Calu3 (cell line): ENCODE measurements at regions of chr12 and their contacts with region 1.

Region 1: GRCh38 chr12:46675736-46676135 is 150.1 kb downstream of the SLC38A4 start:
- DNase-seq: peak; percentile 24
- H3K4me3 Mint-ChIP-seq: peak overlapping the region; percentile 41
- H3K27ac Mint-ChIP-seq: no peak overlapping the region
- H3K4me1 Mint-ChIP-seq: peaks cover 17% of the 10 kb centered on the region
- H3K27me3 Mint-ChIP-seq: no peaks in the 10 kb centered on the region
- CTCF ChIP-seq: no peak

Region 2: DNA sequence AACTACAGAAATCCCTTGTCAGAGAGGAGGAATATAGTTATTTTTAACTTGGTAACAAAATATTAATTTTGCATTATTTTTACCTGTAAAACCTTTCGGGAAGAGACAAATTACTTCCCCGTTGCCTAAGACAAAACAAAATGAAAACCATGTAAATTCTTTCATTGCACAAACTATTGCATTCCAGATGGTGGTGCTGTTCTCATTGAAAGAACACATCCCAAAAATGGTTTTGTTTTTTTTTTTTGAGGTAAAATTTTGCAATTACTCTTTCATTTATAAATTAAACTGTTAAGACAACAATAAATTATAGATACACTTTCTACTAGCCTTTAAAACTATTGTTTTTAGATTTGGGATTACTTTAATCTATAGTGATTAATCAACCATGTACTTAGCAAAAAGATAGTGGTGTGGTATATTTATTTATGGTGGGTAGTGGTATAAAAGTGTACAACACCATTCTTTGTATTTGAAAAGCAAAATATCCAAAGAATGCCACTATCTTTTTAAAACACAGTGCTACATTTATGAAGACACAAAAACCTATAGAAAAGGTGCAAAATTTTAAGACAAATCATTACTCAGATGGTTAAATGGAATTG is 522.4 kb before region 1 on chr12:
- CTCF ChIA-PET with region 1: no interaction called
- intact Hi-C with region 1: loop called (anchors 1 kb)
- DNase-seq: no peak
- H3K4me3 Mint-ChIP-seq: no peak overlapping the region
- H3K27ac Mint-ChIP-seq: no peak overlapping the region
- H3K4me1 Mint-ChIP-seq: peaks cover 8% of the 10 kb centered on the region
- H3K27me3 Mint-ChIP-seq: no peaks in the 10 kb centered on the region
- CTCF ChIP-seq: peak; percentile 27

Region 3: GRCh38 chr12:46342562-46343033 is 333.1 kb before region 1 on chr12:
- CTCF ChIA-PET with region 1: interaction called, 4 read pairs
- intact Hi-C with region 1: loop called (anchors 2 kb)
- DNase-seq: peak; percentile 23
- H3K4me3 Mint-ChIP-seq: no peak overlapping the region
- H3K27ac Mint-ChIP-seq: peak overlapping the region; percentile 15
- H3K4me1 Mint-ChIP-seq: peaks cover 17% of the 10 kb centered on the region
- H3K27me3 Mint-ChIP-seq: no peaks in the 10 kb centered on the region
- CTCF ChIP-seq: peak; percentile 30

Region 4: GRCh38 chr12:46364777-46365580 is 310.8 kb before region 1 on chr12:
- CTCF ChIA-PET with region 1: no interaction called
- intact Hi-C with region 1: loop called (anchors 5 kb)
- DNase-seq: peak; percentile 62
- H3K4me3 Mint-ChIP-seq: peak overlapping the region; percentile 53
- H3K27ac Mint-ChIP-seq: peak overlapping the region; percentile 50
- H3K4me1 Mint-ChIP-seq: peaks cover 16% of the 10 kb centered on the region
- H3K27me3 Mint-ChIP-seq: no peaks in the 10 kb centered on the region
- CTCF ChIP-seq: no peak

Region 5: DNA sequence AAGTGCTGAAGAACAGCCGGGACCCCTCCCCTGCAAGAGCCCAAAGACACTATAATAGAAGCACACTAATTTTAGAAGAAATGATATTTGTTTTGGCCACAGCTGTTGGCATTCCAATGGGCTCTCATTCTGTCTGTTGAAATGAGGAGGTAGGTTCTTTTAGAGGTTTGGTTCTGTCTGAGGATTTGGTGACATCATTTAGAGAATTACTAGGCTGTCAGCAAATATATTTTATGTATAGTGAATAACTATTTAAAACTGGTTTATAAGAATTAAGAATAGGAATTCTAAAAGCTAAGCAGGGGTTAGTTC is 102.4 kb before region 1 on chr12:
- CTCF ChIA-PET with region 1: no interaction called
- intact Hi-C with region 1: no loop called
- DNase-seq: no peak
- H3K4me3 Mint-ChIP-seq: no peak overlapping the region
- H3K27ac Mint-ChIP-seq: no peak overlapping the region
- H3K4me1 Mint-ChIP-seq: no peaks in the 10 kb centered on the region
- H3K27me3 Mint-ChIP-seq: no peaks in the 10 kb centered on the region
- CTCF ChIP-seq: no peak

Region 6: DNA sequence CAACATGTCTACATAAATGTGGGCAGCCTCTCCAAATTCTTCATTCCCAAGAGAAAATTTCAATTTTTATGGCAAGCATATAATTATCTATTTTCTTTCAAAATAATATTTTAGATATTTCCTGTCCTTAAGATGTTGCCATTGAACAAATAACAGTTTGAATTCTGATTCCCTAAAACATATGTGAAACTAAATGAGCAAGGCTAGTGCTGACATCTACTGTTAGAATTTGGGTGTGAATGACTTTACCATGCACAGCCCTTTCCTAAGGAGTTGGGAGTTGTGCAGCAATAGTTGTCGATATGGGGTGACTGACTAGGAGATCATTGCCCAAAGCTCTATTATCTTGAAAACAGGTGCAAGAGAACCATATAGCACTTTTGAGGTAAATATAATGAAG is 258.2 kb after region 1 on chr12:
- CTCF ChIA-PET with region 1: no interaction called
- intact Hi-C with region 1: loop called (anchors 1 kb)
- DNase-seq: peak; percentile 10
- H3K4me3 Mint-ChIP-seq: no peak overlapping the region
- H3K27ac Mint-ChIP-seq: no peak overlapping the region
- H3K4me1 Mint-ChIP-seq: peaks cover 10% of the 10 kb centered on the region
- H3K27me3 Mint-ChIP-seq: no peaks in the 10 kb centered on the region
- CTCF ChIP-seq: no peak

Region 7: GRCh38 chr12:47021298-47021697 is 345.6 kb after region 1 on chr12:
- CTCF ChIA-PET with region 1: no interaction called
- intact Hi-C with region 1: loop called (anchors 10 kb)
- DNase-seq: peak; percentile 28
- H3K4me3 Mint-ChIP-seq: no peak overlapping the region
- H3K27ac Mint-ChIP-seq: no peak overlapping the region
- H3K4me1 Mint-ChIP-seq: peaks cover 23% of the 10 kb centered on the region
- H3K27me3 Mint-ChIP-seq: no peaks in the 10 kb centered on the region
- CTCF ChIP-seq: peak; percentile 35